GM10248 (cell line): ENCODE measurements at regions of chr1 and their contacts with region 1.

Region 1: GRCh38 chr1:182397771-182398393 is 2.6 kb downstream of the TEDDM1 start:
- DNase-seq: no peak
- CTCF ChIP-seq: no peak

Region 2: GRCh38 chr1:182129398-182129797 is 268.5 kb before region 1 on chr1:
- CTCF ChIA-PET with region 1: interaction called, 10 read pairs
- POLR2A ChIA-PET with region 1: no interaction called
- DNase-seq: no peak
- CTCF ChIP-seq: no peak

Region 3: GRCh38 chr1:182149411-182149965 is 248.4 kb before region 1 on chr1:
- CTCF ChIA-PET with region 1: interaction called, 245 read pairs
- POLR2A ChIA-PET with region 1: no interaction called
- DNase-seq: peak; percentile 37
- CTCF ChIP-seq: no peak

Region 4: GRCh38 chr1:182381962-182382819 is 15.7 kb before region 1 on chr1:
- CTCF ChIA-PET with region 1: interaction called, 51 read pairs
- POLR2A ChIA-PET with region 1: interaction called, 3 read pairs
- DNase-seq: no peak
- CTCF ChIP-seq: no peak

Region 5: DNA sequence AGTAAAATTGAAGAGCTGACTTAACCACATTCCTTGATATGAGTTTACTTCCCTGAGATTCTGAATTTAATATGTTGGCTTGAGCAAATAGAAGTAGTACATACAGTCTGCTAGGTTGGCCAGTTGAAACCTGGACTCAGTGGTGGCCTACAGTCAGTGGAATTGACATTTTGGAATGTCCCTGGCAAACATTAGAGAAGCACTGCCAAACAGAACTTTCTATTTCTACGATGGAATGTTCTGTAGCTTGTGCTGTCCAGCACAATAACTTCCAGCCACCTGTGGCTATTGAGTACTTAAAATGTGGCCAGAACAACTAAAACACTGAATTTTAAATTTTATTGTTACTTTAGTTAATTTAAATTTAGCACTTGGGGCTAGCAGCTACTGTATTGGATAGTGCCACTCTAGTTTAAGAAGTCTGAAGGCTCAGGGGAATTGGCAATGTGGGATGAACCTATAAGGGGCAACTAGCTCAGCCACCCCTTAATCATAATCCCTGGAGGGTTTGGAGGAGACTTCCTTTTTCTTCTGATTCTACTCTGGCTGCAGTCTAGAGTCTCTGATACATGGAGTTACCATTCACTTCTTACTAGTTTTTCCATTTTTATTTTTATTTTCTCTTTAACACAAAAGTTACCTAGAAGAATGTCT is 12.9 kb after region 1 on chr1:
- CTCF ChIA-PET with region 1: interaction called, 38 read pairs
- POLR2A ChIA-PET with region 1: no interaction called
- DNase-seq: no peak
- CTCF ChIP-seq: no peak

Region 6: GRCh38 chr1:182415789-182416188 is 17.9 kb after region 1 on chr1:
- CTCF ChIA-PET with region 1: interaction called, 38 read pairs
- POLR2A ChIA-PET with region 1: no interaction called
- DNase-seq: no peak
- CTCF ChIP-seq: no peak

Region 7: DNA sequence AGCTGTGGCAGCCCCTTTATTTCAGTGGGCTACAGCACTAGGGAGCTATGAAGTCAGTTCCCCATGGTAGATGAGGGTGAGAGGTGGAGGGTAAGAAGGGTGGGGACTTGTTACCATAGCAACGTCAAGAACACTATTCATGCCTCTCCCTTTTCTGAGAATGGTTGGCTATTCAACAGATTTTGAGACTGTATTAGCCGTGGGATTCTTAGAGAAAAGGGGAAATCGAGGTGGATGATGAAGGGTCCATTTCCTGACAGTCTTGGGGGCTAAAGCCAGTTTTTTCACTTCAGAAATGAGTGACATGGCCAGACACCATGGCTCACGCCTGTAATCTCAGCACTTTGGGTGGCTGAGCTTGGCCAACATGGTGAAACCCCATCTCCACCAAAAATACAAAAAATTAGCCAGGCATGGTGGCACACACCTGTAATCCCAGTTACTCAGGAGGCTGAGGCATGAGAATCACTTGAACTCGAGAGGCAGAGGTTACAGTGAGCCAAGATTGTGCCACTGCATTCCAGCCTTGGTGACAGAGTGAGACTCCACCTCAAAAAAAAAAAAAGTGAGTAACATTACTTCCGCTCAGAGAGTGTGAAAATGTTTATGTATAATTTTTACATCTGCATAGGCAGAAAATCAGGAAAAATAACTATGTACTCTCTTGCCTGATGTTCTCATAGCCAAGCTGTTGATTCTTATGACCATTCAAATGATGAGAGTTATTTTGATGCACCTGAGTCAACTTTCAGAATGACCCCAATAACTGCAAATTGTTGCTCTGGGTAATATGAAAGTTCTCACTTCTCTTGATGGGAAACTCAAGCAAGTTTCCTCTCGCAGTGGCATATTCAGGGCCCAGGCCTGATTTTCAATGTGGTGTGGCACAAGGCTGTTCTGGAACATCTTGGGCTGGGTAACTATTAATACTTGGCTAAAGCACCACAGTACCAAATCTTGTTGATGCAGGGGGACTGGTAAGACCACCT is 28.9 kb after region 1 on chr1:
- CTCF ChIA-PET with region 1: interaction called, 11 read pairs
- POLR2A ChIA-PET with region 1: no interaction called
- DNase-seq: peak; percentile 62
- CTCF ChIP-seq: no peak